ENCODE measurements at regions of chr12 and their contacts with region 1.

Region 1: GRCh38 chr12:46608431-46609272 is 217.1 kb downstream of the SLC38A4 start:
- DNase-seq: no peak
- H3K4me3 Mint-ChIP-seq: peak overlapping the region; percentile 69
- H3K27ac Mint-ChIP-seq: peak overlapping the region; percentile 67
- H3K4me1 Mint-ChIP-seq: peaks cover 24% of the 10 kb centered on the region
- H3K27me3 Mint-ChIP-seq: no peaks in the 10 kb centered on the region

Region 2: DNA sequence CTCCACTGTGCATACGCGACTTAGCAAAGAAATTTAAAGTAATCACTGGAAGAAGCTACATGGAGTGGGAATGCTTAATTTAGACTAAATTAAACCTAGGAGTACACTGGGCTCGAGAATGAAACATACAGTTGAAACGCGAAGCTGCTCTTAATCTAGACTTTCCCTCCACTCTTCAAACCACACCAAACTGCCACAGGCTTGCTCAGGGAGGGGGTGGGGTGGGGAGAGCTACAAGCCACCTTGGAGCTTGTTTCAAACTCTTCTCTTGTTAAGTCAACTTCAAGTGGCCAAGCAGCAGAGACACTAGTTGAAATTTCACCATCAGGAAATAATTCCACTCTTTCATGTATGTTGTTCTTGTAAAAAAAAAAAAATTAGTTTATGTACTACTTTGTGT is 409.7 kb before region 1 on chr12:
- intact Hi-C with region 1: no loop called
- DNase-seq: no peak
- H3K4me3 Mint-ChIP-seq: no peak overlapping the region
- H3K27ac Mint-ChIP-seq: peak overlapping the region; percentile 45
- H3K4me1 Mint-ChIP-seq: peaks cover 4% of the 10 kb centered on the region
- H3K27me3 Mint-ChIP-seq: no peaks in the 10 kb centered on the region

Region 3: DNA sequence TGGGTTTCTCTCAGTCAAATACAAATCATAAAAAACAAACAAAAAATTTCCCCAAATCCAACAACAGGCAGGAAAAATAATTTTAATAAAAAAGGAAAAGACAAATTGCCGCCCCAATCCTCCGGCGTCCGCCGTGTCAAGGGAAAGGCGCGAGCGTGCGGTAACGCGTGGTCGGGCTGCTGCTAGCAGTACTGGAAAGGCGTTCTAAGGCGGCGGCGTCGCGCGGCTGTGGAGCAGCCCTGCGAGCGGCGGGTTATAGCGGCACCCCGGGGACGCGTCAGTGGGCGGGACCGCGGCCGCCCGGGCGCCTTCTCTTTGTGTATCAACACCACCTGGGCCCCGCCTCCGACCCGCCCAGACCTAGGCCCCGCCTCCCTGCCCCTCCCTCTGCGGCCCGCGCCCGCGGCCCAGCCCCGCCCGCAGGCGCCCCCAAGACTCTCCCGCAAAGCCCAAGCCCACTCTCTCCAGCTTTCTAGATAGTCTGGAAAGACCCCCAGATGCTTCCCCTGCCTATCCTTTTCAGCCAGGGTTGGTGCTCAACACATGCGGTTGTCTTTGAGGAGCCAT is 236.0 kb before region 1 on chr12 and contains the start of gene SLC38A2:
- intact Hi-C with region 1: no loop called
- DNase-seq: peak; percentile 99
- H3K4me3 Mint-ChIP-seq: peak within 1 kb of the TSS; percentile 86
- H3K27ac Mint-ChIP-seq: peak within 1 kb of the TSS; percentile 99
- H3K4me1 Mint-ChIP-seq: peaks cover 60% of the 10 kb centered on the region
- H3K27me3 Mint-ChIP-seq: peaks cover 3% of the 10 kb centered on the region
- total RNA-seq, gene SLC38A2: 158 and 168 TPM in 2 replicates

Region 4: GRCh38 chr12:46382964-46383653 is 225.5 kb before region 1 on chr12:
- intact Hi-C with region 1: loop called (anchors 5 kb)
- DNase-seq: peak; percentile 99
- H3K4me3 Mint-ChIP-seq: peak overlapping the region; percentile 83
- H3K27ac Mint-ChIP-seq: peak overlapping the region; percentile 98
- H3K4me1 Mint-ChIP-seq: peaks cover 36% of the 10 kb centered on the region
- H3K27me3 Mint-ChIP-seq: no peaks in the 10 kb centered on the region

Region 5: GRCh38 chr12:46556105-46556559 is 52.5 kb before region 1 on chr12:
- intact Hi-C with region 1: loop called (anchors 5 kb)
- DNase-seq: no peak
- H3K4me3 Mint-ChIP-seq: no peak overlapping the region
- H3K27ac Mint-ChIP-seq: no peak overlapping the region
- H3K4me1 Mint-ChIP-seq: peaks cover 38% of the 10 kb centered on the region
- H3K27me3 Mint-ChIP-seq: no peaks in the 10 kb centered on the region